Common myeloid progenitor, CD34-positive (primary cell): ENCODE measurements at regions of chr11 and their contacts with region 1.

Region 1: DNA sequence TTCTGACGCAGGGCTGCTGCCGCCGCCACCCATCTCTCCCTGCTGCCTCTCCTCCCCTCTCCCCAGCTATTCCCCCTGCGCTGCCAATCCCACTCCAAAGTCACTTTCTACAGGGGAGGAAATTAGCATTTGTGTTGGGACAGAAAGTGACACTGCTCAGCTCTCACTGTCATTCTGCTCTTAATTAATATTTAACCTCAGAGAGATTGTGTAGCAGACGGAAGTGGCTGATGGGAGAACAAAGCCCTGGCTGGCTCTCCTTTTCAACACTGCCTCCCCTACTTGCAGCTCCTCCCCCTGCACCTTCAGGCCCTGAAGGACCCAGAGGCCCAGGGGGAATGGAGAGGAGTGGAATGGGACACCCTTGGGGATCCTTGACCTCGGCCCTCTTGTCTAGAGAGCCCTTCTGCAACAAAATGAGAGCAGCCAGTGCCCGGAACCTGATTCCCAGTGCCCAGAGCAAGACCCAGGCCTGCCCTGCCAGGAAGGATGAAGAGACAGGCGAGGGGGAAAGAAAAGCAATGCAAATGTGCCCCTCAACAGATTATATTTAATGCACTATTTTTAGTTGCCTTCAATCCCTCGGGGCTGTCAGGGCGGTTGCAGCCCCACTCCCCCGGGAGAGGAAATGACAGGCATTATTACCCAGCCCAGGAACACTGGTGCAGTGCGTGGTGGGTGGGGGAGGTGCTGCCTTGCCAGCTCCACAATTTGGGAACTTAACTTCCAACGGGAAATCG is 14.6 kb upstream of the NRGN start:
- DNase-seq: peak in 2 of 3 donors; percentile 42 to 49
- H3K4me3 ChIP-seq: peak overlapping the region in 5 of 7 experiments; percentile 15 to 58 (median 41)
- H3K27ac ChIP-seq: no peak overlapping the region
- H3K4me1 ChIP-seq: peaks cover 16 to 60% (median 39%) of the 10 kb centered on the region in 4 experiments
- H3K27me3 ChIP-seq: no peaks in the 10 kb centered on the region

Region 2: GRCh38 chr11:124612045-124612444 is 113.1 kb before region 1 on chr11:
- CTCF ChIA-PET with region 1: no interaction called
- POLR2A ChIA-PET with region 1: no interaction called
- DNase-seq: peak in 2 of 3 donors; percentile 43 to 61
- H3K4me3 ChIP-seq: no peak overlapping the region
- H3K27ac ChIP-seq: no peak overlapping the region
- H3K4me1 ChIP-seq: peaks cover 0 to 12% (median 4%) of the 10 kb centered on the region in 4 experiments
- H3K27me3 ChIP-seq: no peaks in the 10 kb centered on the region

Region 3: GRCh38 chr11:124739479-124740276 is 14.5 kb after region 1 on chr11 and contains the start of gene NRGN:
- CTCF ChIA-PET with region 1: interaction called, 17 read pairs
- POLR2A ChIA-PET with region 1: no interaction called
- DNase-seq: peak; percentile 78 to 88 (median 85)
- H3K4me3 ChIP-seq: peak within 1 kb of the TSS; percentile 40 to 84 (median 75)
- H3K27ac ChIP-seq: no peak within 1 kb of the TSS
- H3K4me1 ChIP-seq: peaks cover 0 to 55% (median 45%) of the 10 kb centered on the region in 4 experiments
- H3K27me3 ChIP-seq: no peaks in the 10 kb centered on the region

Region 4: DNA sequence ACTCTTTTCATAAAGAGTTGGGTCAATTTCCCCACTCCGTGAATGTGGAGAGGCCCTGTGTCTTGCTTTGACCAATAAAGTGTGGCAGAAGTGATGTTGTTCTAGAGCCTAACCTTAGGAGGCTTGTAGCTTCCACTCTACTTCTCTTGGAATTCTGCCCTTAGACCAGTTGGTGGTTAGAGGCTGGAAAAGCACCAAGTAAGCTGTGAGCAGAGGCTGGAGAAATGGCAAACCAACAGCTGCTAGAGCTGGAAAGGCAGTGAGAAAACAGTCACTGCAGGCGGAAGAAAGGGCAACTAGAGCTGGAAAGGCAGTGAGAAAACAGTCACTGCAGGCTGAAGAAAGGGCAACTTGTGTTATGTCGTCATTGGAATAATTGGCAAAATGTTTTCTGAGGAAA is 104.8 kb after region 1 on chr11:
- CTCF ChIA-PET with region 1: no interaction called
- POLR2A ChIA-PET with region 1: no interaction called
- DNase-seq: no peak
- H3K4me3 ChIP-seq: no peak overlapping the region
- H3K27ac ChIP-seq: no peak overlapping the region
- H3K4me1 ChIP-seq: no peaks in the 10 kb centered on the region
- H3K27me3 ChIP-seq: peaks cover 0 to 4% (median 2%) of the 10 kb centered on the region in 5 experiments